Pancreas (tissue), 10 donors: ENCODE measurements at regions of chr6 and their contacts with region 1.

Region 1: DNA sequence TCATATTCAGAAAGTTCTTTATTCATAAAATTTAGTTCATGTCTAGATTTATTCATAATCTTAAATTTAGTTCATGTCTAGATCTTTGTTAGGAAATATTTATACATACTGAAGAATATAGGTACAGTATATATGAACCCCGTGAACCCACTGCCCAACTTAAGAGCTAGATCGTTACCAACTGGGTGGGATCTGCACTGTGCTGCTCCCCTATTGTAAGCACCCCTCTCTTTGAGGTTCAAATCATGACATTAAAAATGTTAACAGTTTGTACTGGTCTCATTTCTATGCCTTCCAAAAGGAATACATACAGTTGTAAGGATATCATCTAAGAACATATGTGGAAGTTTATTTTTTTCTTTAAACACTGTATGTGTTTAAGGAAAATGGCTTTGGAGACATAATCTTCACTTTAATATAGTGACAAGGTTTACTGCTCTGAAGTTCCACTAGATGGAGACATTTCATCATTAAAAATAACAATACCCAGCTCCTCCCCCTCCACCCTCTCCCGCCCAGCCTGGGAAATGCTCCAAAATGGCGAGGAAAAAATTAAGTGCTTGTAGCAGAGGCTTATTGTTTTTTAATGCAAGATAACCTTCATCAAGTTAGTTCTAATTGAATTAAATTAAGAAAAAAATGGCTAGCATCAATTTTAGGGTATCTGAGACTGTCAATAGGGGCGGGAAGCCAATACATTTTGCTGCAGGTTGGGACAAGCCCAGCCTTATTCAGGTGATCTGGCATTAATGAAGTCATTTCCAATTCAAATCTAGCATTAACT is 104.1 kb upstream of the TRAF3IP2 start:
- DNase-seq: peak in 5 of 6 donors; percentile 59 to 70 (median 68)
- ATAC-seq: peak; percentile 94 to 98 (median 94)
- H3K4me3 ChIP-seq: peak overlapping the region in 1 of 4 donors; percentile 24
- H3K27ac ChIP-seq: no peak overlapping the region
- H3K4me1 ChIP-seq: peaks cover 0 to 9% (median 3%) of the 10 kb centered on the region in 3 donors
- H3K27me3 ChIP-seq: no peaks in the 10 kb centered on the region
- CTCF ChIP-seq: peak; percentile 35 to 59 (median 47)

Region 2: GRCh38 chr6:111997078-111997852 is 287.5 kb after region 1 on chr6:
- intact Hi-C with region 1: loop called in 2 of 3 experiments (anchors 5 to 10 kb)
- DNase-seq: peak; percentile 64 to 90 (median 78)
- ATAC-seq: peak; percentile 86 to 100 (median 98)
- H3K4me3 ChIP-seq: no peak overlapping the region
- H3K27ac ChIP-seq: no peak overlapping the region
- H3K4me1 ChIP-seq: no peaks in the 10 kb centered on the region
- H3K27me3 ChIP-seq: peaks cover 0 to 3% (median 0%) of the 10 kb centered on the region in 4 donors
- CTCF ChIP-seq: peak; percentile 77 to 89 (median 81)

Region 3: DNA sequence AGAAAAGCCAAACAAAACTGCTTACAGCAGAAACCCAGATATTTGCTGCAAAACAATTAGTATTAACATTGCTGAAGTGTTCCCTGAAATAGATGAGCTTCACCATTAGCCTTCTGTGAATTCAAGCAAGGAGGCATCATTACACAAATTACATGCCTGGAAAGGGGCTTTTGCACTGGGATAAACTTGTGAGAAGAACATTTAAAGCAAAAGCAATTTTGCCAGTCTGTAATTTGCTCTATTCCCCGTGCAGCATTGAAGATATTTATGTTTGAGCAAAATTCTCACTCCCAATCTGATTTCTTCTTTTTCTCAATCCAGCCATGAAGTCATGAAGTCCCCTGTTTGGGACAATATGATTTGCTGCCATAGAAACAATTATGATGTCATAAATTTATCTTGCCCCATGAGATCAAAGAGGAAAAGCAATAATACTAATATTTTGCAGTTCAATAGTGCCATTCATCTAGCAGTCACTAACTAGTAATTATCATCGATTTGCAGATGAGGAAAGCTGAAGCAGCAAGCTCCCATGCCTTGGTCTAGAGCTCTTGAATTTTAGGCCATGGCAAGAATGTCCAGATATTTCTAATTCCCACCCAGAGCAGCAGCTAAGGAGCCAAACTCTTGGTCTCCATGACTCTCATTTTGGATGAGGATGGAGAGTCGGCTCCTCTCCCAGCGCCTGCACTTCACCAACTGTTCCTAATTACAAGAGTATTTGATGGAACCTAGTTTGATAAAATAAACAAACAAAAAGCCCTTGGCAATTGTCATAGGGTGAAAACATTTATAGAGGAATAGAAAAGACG is 294.6 kb after region 1 on chr6:
- intact Hi-C with region 1: loop called in 2 of 3 experiments (anchors 5 to 10 kb)
- DNase-seq: no peak
- ATAC-seq: peak in 1 of 4 donors; percentile 28
- H3K4me3 ChIP-seq: no peak overlapping the region
- H3K27ac ChIP-seq: no peak overlapping the region
- H3K4me1 ChIP-seq: no peaks in the 10 kb centered on the region
- H3K27me3 ChIP-seq: no peaks in the 10 kb centered on the region
- CTCF ChIP-seq: no peak

Region 4: GRCh38 chr6:112037783-112038216 is 328.0 kb after region 1 on chr6:
- intact Hi-C with region 1: loop called in 1 of 3 experiments (anchors 10 kb)
- DNase-seq: peak in 1 of 6 donors; percentile 23
- ATAC-seq: peak in 2 of 4 donors; percentile 63 to 64
- H3K4me3 ChIP-seq: no peak overlapping the region
- H3K27ac ChIP-seq: peak overlapping the region in 1 of 4 donors; percentile 17
- H3K4me1 ChIP-seq: peaks cover 0 to 2% (median 0%) of the 10 kb centered on the region in 3 donors
- H3K27me3 ChIP-seq: no peaks in the 10 kb centered on the region
- CTCF ChIP-seq: no peak

Region 5: GRCh38 chr6:112163295-112164257 is 453.8 kb after region 1 on chr6:
- intact Hi-C with region 1: loop called in 1 of 3 experiments (anchors 10 kb)
- DNase-seq: peak; percentile 44 to 86 (median 73)
- ATAC-seq: peak; percentile 96 to 99 (median 98)
- H3K4me3 ChIP-seq: no peak overlapping the region
- H3K27ac ChIP-seq: no peak overlapping the region
- H3K4me1 ChIP-seq: no peaks in the 10 kb centered on the region
- H3K27me3 ChIP-seq: no peaks in the 10 kb centered on the region
- CTCF ChIP-seq: peak; percentile 64 to 83 (median 79)